HepG2 (cell line): ENCODE measurements at regions of chr6 and their contacts with region 1.

Region 1: DNA sequence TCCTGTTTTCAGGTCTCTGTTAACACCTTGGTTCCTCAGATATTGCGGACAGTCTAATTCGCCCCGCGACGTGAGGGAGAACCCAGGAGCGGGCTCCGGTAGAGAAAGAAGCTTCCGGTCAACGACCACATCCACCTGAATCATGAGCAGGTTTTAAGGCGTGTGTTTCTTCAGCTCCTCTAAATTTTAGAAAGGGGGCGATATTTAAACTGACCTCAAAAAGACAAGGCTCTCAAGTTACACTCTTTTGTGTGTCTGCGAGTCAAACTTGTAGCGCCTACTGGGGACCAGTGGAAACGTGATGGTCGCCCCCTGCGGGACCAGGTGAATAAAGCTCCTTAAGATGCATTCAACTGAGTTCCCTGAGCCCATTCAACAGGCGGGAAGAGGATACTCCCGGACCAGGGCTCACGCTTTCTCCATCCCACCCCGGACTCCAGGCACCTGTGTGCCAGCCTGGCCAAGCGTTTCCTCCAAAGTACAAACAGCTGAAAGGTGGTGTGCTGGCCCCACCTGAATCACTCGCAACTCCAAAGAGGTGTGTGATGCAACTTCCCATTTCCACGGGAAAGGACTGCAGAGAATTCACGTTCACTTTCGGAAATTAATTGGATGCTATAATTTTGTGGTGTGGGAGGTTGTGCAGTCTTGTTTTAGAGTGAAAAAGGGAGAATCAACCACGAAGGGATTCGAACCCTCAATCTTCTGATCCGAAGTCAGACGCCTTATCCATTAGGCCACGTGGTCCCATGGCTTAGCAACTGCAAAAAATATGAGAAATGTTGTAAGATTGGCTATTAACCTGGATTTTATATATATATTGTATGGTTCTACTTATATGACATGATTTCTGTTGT is 17.0 kb downstream of the GPX5 start:
- DNase-seq: peak; percentile 80
- ATAC-seq: peak; percentile 84
- H3K4me3 ChIP-seq: peak overlapping the region; percentile 53 to 76 (median 64)
- H3K27ac ChIP-seq: no peak overlapping the region
- H3K4me1 ChIP-seq: peaks cover 22% of the 10 kb centered on the region
- H3K27me3 ChIP-seq: peaks cover 0 to 3% of the 10 kb centered on the region in 2 experiments; a peak in 2 of 5 replicates
- CTCF ChIP-seq: peak; percentile 75
- EP300 ChIP-seq: no peak
- POLR2A ChIP-seq: no peak
- RAD21 ChIP-seq: peak; percentile 71

Region 2: GRCh38 chr6:28399350-28400121 is 143.1 kb before region 1 on chr6 and contains the start of gene ZSCAN12:
- CTCF ChIA-PET with region 1: interaction called, 4 read pairs
- POLR2A ChIA-PET with region 1: no interaction called
- in situ Hi-C with region 1: no loop called
- intact Hi-C with region 1: loop called (anchors 5 kb)
- DNase-seq: peak; percentile 86
- ATAC-seq: peak; percentile 98
- H3K4me3 ChIP-seq: peak within 1 kb of the TSS; percentile 82 to 99 (median 94)
- H3K27ac ChIP-seq: peak within 1 kb of the TSS; percentile 68
- H3K4me1 ChIP-seq: peaks cover 49% of the 10 kb centered on the region
- H3K27me3 ChIP-seq: no peaks in the 10 kb centered on the region; a peak in 1 of 5 replicates
- CTCF ChIP-seq: peak; percentile 94
- EP300 ChIP-seq: peak in 1 of 2 experiments; percentile 64; a peak in 3 of 4 replicates
- POLR2A ChIP-seq: peak; percentile 83 to 90
- RAD21 ChIP-seq: peak; percentile 67
- total RNA-seq, gene ZSCAN12: 8.9 and 9.8 TPM in 2 replicates

Region 3: GRCh38 chr6:28474441-28475219 is 68.0 kb before region 1 on chr6:
- CTCF ChIA-PET with region 1: no interaction called
- POLR2A ChIA-PET with region 1: no interaction called
- in situ Hi-C with region 1: no loop called
- intact Hi-C with region 1: loop called (anchors 2 kb)
- DNase-seq: peak; percentile 85
- ATAC-seq: peak; percentile 92
- H3K4me3 ChIP-seq: peak overlapping the region; percentile 42 to 65 (median 62)
- H3K27ac ChIP-seq: no peak overlapping the region
- H3K4me1 ChIP-seq: peaks cover 16% of the 10 kb centered on the region
- H3K27me3 ChIP-seq: peaks cover 0 to 25% of the 10 kb centered on the region in 2 experiments; a peak in 4 of 5 replicates
- CTCF ChIP-seq: 0 out of 2 replicates have a peak, but pooled peaks have one; percentile 4
- EP300 ChIP-seq: peak in 1 of 2 experiments; percentile 33; a peak in 1 of 4 replicates
- POLR2A ChIP-seq: no peak
- RAD21 ChIP-seq: no peak

Region 4: DNA sequence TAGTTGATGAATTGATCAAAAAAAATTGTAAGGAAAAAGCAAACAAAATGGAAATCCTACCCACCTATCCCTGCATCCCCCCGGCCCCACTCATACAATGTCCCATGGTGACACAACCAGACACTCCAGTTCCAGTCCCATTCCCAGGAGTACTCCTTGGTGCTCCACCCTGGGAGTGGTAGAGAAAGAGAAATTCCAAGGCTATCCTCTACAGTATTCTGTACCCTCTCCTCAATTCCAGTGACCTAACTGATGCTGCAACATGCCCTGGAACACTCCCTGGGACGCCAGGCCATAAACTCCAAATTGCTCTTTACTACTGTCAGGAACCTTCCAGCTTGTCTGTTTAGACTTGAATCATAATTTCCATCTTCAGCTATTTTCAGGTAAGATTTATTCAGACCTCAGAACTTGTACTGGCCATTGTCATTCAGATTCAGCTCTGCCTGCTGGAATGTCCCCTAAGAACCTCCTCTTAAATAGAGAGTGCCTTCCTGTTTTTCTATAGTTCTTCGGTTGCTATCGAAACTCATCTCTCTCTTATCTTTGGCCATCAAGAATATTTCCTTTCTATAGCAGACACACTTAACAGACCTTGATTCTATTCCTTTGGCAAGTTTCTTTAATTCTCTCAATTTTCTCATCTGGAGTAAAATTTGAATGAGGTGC is 35.7 kb before region 1 on chr6:
- CTCF ChIA-PET with region 1: no interaction called
- POLR2A ChIA-PET with region 1: no interaction called
- in situ Hi-C with region 1: no loop called
- intact Hi-C with region 1: no loop called
- DNase-seq: no peak
- ATAC-seq: no peak
- H3K4me3 ChIP-seq: no peak overlapping the region
- H3K27ac ChIP-seq: no peak overlapping the region
- H3K4me1 ChIP-seq: peaks cover 8% of the 10 kb centered on the region; the same call in 1 of the 2 replicates
- H3K27me3 ChIP-seq: peaks cover 3% of the 10 kb centered on the region in 2 experiments; a peak in 3 of 5 replicates
- CTCF ChIP-seq: no peak
- EP300 ChIP-seq: no peak
- POLR2A ChIP-seq: no peak
- RAD21 ChIP-seq: no peak